ENCODE measurements at regions of chr1 and their contacts with region 1.

Region 1: DNA sequence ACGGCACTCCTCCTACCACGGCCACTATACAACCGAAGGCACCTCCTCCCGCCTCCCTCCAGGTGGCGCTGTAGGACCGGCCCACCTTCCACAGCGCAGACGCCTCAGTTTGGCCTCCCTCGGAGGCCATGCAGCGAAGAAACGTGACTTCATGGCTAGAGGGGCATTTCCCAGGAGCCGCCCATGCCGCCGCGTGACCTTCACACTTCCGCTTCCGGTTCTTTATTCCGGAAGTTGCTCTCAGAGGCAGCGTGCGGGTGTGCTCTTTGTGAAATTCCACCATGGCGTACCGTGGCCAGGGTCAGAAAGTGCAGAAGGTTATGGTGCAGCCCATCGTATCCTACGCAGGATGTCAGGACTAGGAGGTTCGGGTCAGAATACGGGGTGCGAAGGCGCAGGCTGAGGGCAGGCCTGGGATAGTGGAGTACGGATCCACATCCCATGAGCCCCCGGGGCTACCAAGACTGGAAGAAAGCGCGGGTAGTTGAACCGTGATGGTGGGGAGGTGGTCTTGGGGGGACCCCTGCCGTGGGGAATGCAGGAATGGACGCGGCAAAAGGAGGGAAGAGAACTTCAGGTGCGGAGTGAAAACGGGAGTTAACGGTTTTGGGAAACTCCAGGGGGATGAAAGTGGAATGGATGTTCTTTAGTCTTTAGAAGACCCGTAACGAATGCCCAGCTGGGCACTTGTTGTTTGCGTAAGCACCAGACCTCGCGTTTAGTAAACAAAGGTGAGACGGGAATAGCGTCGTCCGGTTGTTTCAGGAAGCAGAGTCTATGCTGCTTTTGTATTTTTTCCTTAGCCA is at the start of gene SNRPE:
- DNase-seq: peak; percentile 95 to 98 (median 97)
- ATAC-seq: peak; percentile 97
- H3K4me3 Mint-ChIP-seq: peak within 1 kb of the TSS; percentile 94 to 100 (median 99)
- H3K27ac Mint-ChIP-seq: peak within 1 kb of the TSS; percentile 92 to 100 (median 98)
- H3K4me1 Mint-ChIP-seq: peaks cover 11 to 28% (median 21%) of the 10 kb centered on the region in 4 donors
- H3K27me3 Mint-ChIP-seq: no peaks in the 10 kb centered on the region
- polyA plus RNA-seq, gene SNRPE: 223 to 281 (median 249) TPM

Region 2: DNA sequence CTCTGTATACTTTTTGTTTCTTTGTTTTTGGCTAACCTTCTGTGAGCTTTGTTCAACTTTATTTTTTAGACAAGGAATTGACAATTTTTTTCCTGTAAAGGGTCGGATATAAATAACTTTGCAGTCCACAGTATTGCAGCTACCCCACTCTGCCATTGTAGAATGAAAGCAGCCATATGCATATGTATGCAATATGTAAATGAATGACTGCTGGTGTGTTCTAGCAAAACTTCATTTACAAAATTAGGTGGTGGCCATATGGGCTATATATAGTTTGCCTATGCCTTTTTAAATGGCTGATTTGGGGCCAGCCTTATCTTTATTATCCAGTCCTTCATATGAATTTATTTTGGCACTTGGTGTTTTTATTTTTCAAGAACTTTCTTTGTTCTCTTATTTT is 18.1 kb before region 1 on chr1:
- POLR2A ChIA-PET with region 1: no interaction called
- DNase-seq: no peak
- ATAC-seq: no peak
- H3K4me3 Mint-ChIP-seq: no peak overlapping the region
- H3K27ac Mint-ChIP-seq: peak overlapping the region in 2 of 10 donors; percentile 28 to 68
- H3K4me1 Mint-ChIP-seq: no peaks in the 10 kb centered on the region
- H3K27me3 Mint-ChIP-seq: no peaks in the 10 kb centered on the region

Region 3: DNA sequence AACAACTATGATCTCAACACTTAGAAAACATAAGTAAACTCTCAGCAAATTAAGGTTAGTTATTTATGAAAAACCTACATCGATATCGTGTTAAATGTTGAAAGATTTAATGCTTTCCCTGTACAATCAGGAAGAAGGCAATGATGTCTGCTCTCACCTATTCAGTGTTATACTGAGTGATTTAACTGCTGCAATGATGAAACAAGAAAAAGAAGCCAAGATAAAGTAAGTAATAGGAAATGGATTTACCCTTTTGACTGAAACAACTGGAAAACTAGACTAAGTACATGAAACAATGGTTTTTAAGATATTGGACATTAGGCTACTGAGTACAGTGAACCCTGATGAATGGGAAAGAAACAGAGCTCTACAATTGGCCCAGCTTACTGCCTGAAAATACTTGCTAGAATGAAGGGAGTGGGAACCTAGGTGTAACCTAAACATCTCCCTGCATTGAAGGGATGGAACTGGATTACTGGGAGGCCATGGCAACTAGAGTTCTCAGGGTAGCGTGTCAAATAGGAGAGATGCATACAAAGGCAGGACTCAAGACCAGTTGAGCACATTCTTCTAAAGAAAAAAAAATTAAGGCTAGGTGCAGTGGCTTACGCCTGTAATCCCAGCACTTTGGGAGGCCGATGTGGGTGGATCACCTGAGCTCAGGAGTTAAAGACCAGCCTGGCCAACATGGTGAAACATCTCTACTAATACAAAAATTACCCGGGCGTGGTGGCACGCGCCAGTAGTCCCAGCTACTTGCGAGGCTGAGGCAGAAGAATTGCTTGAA is 37.1 kb after region 1 on chr1:
- POLR2A ChIA-PET with region 1: no interaction called
- DNase-seq: no peak
- ATAC-seq: no peak
- H3K4me3 Mint-ChIP-seq: no peak overlapping the region
- H3K27ac Mint-ChIP-seq: no peak overlapping the region
- H3K4me1 Mint-ChIP-seq: no peaks in the 10 kb centered on the region
- H3K27me3 Mint-ChIP-seq: peaks cover 0 to 4% (median 3%) of the 10 kb centered on the region in 5 donors

Region 4: DNA sequence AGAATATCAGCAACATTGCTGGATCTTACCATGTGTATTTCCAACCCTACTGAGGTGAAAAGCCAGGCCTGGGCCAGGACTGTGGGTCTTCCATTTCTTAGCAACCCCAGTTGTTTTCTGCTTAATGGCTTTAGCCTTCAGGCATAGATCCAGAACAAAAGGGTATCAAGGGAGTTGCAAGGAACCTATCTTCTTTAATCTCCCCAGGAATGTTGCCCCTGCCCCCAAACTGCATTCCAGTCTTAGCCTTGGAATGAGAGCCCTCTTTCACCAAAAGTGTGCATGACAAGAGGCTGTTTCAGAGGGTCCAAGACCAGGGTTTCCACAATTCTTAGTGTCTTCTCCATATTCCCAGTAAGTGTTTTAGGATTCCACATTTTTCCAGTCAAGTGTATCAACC is 123.5 kb after region 1 on chr1:
- POLR2A ChIA-PET with region 1: no interaction called
- DNase-seq: no peak
- ATAC-seq: no peak
- H3K4me3 Mint-ChIP-seq: no peak overlapping the region
- H3K27ac Mint-ChIP-seq: no peak overlapping the region
- H3K4me1 Mint-ChIP-seq: no peaks in the 10 kb centered on the region
- H3K27me3 Mint-ChIP-seq: peaks cover 3 to 10% (median 7%) of the 10 kb centered on the region in 5 donors

Region 5: DNA sequence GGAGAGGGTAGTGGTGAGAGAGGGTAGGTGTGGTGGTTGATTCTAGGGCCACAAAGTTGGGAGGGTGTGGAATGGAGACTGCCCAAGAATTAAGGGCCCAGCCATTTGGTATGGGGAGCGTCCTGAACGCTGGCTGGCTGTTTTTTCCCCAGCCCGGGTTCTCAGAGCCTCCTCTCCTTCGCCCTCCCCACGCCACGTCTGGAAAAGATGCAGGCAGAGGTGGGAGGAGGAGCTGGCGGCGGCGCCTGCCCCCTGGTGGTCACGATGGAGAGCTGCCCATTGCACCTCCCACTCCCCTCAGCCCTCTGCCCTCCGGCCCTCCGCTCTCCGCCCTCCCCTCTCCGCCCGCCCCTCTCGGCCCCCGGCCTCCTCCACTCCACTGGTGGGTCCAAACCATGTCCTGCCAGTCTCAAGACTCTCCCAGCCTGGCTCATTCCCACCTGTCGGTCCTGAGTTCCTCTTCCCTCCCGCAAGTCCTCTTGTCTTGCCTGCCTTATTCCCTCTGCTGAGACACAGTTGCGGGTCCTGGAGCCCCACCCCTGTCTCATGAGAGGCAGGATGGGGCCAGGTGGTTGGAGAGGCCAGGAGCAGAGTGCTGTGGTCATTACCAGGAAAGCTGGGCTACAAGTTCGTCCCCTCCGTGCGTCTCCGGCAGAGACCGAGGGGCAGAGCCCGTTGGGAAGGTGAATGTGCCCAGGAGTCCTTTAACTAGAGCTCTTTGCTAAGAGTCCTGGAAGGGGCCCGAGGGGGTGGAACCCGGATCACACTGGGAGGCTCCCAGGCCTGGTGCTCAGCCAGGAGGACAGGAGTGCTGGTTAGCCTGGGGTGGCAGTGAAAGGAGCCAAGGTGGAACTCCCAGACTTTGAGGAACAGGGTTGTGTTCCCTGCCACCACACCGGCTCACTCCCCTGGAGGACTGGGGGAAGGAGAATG is 267.6 kb after region 1 on chr1:
- POLR2A ChIA-PET with region 1: interaction called, 16 read pairs
- DNase-seq: peak; percentile 25 to 73 (median 54)
- ATAC-seq: peak; percentile 82 to 97
- H3K4me3 Mint-ChIP-seq: peak overlapping the region in 4 of 10 donors; percentile 34 to 43 (median 39)
- H3K27ac Mint-ChIP-seq: peak overlapping the region in 3 of 10 donors; percentile 28 to 80 (median 65)
- H3K4me1 Mint-ChIP-seq: peaks cover 2 to 11% (median 5%) of the 10 kb centered on the region in 4 donors
- H3K27me3 Mint-ChIP-seq: peaks cover 0 to 3% (median 0%) of the 10 kb centered on the region in 5 donors